ENCODE measurements at regions of chr20 and their contacts with region 1.

Region 1: DNA sequence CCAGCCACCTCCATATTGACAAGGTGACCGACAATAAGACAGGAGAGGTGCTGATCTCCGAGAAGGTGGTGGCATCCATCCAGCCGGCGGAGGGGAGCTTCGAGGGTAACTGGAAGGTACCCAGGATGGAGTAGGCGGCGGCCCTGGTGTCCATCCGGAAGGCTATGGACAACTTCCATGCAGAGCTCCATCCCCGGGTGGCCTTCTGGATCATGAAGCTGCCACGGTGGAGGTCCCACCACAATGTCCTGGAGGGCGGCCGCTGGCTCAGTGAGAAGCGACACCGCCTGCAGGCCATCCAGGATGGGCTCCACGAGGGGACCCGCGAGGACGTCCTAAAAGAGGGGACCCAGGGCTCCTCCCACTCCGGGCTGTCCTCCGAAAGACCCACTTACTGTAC is 17.0 kb downstream of the DEFB115 start:
- DNase-seq: no peak
- ATAC-seq: no peak
- H3K4me3 ChIP-seq: no peak overlapping the region
- H3K27ac ChIP-seq: no peak overlapping the region
- H3K4me1 ChIP-seq: no peaks in the 10 kb centered on the region
- H3K27me3 ChIP-seq: no peaks in the 10 kb centered on the region
- CTCF ChIP-seq: no peak

Region 2: DNA sequence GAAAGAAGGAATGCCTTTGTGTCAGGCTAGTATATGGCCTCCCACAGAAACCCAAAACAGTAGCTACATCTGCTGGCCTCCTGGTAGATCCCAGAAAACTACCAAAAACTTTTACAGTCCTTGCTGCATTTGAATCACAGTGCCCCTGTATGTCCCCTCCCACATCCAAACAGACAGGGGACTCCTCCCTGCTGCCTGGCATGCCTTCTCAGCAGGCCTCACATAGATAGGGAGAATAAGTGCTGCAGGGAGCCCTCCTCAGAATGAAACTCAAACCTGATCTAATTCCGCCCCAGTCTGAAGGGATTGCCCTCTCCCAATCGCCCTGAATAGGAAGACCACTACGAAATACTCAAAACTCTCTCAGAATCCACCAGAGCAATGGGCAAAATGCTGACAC is 48.1 kb after region 1 on chr20:
- CTCF ChIA-PET with region 1: no interaction called
- POLR2A ChIA-PET with region 1: no interaction called
- in situ Hi-C with region 1: no loop called
- intact Hi-C with region 1: loop called (anchors 10 kb)
- DNase-seq: no peak
- ATAC-seq: no peak
- H3K4me3 ChIP-seq: no peak overlapping the region
- H3K27ac ChIP-seq: no peak overlapping the region
- H3K4me1 ChIP-seq: no peaks in the 10 kb centered on the region
- H3K27me3 ChIP-seq: peaks cover 3% of the 10 kb centered on the region; the same call in 1 of the 2 replicates
- CTCF ChIP-seq: no peak

Region 3: GRCh38 chr20:31374346-31374745 is 99.9 kb after region 1 on chr20:
- CTCF ChIA-PET with region 1: no interaction called
- POLR2A ChIA-PET with region 1: no interaction called
- in situ Hi-C with region 1: no loop called
- intact Hi-C with region 1: loop called (anchors 10 kb)
- DNase-seq: no peak
- ATAC-seq: no peak
- H3K4me3 ChIP-seq: no peak overlapping the region
- H3K27ac ChIP-seq: no peak overlapping the region
- H3K4me1 ChIP-seq: no peaks in the 10 kb centered on the region
- H3K27me3 ChIP-seq: peaks cover 22% of the 10 kb centered on the region
- CTCF ChIP-seq: no peak

Region 4: GRCh38 chr20:31494131-31494530 is 219.7 kb after region 1 on chr20:
- CTCF ChIA-PET with region 1: no interaction called
- POLR2A ChIA-PET with region 1: no interaction called
- in situ Hi-C with region 1: no loop called
- intact Hi-C with region 1: no loop called
- DNase-seq: no peak
- ATAC-seq: peak; percentile 57
- H3K4me3 ChIP-seq: no peak overlapping the region
- H3K27ac ChIP-seq: no peak overlapping the region
- H3K4me1 ChIP-seq: no peaks in the 10 kb centered on the region
- H3K27me3 ChIP-seq: peaks cover 4% of the 10 kb centered on the region; the same call in 1 of the 2 replicates
- CTCF ChIP-seq: peak; percentile 83

Measured in Panc1 (cell line).